Stomach (tissue), 19 donors: ENCODE measurements at regions of chr2 and their contacts with region 1.

Region 1: GRCh38 chr2:121529439-121530211 is 1.1 kb upstream of the RNU4ATAC start:
- DNase-seq: peak; percentile 44 to 92
- H3K4me3 ChIP-seq: peak overlapping the region; percentile 66 to 85 (median 74)
- H3K27ac ChIP-seq: peak overlapping the region; percentile 91 to 98 (median 95)
- H3K4me1 ChIP-seq: peaks cover 12 to 70% (median 45%) of the 10 kb centered on the region in 4 donors
- H3K27me3 ChIP-seq: no peaks in the 10 kb centered on the region
- CTCF ChIP-seq: no peak
- EP300 ChIP-seq: no peak
- POLR2A ChIP-seq: no peak

Region 2: GRCh38 chr2:121469356-121469755 is 60.3 kb before region 1 on chr2:
- intact Hi-C with region 1: loop called (anchors 10 kb)
- DNase-seq: peak in 1 of 2 donors; percentile 27
- H3K4me3 ChIP-seq: no peak overlapping the region
- H3K27ac ChIP-seq: no peak overlapping the region
- H3K4me1 ChIP-seq: peaks cover 0 to 8% (median 5%) of the 10 kb centered on the region in 4 donors
- H3K27me3 ChIP-seq: no peaks in the 10 kb centered on the region
- CTCF ChIP-seq: no peak
- EP300 ChIP-seq: no peak
- POLR2A ChIP-seq: no peak

Region 3: GRCh38 chr2:121479882-121480522 is 49.6 kb before region 1 on chr2:
- intact Hi-C with region 1: no loop called
- DNase-seq: peak; percentile 67 to 79
- H3K4me3 ChIP-seq: no peak overlapping the region
- H3K27ac ChIP-seq: peak overlapping the region in 2 of 5 donors; percentile 8 to 36
- H3K4me1 ChIP-seq: peaks cover 17 to 54% (median 40%) of the 10 kb centered on the region in 4 donors
- H3K27me3 ChIP-seq: no peaks in the 10 kb centered on the region
- CTCF ChIP-seq: peak in 2 of 7 experiments; percentile 20 to 42
- EP300 ChIP-seq: no peak
- POLR2A ChIP-seq: no peak

Region 4: DNA sequence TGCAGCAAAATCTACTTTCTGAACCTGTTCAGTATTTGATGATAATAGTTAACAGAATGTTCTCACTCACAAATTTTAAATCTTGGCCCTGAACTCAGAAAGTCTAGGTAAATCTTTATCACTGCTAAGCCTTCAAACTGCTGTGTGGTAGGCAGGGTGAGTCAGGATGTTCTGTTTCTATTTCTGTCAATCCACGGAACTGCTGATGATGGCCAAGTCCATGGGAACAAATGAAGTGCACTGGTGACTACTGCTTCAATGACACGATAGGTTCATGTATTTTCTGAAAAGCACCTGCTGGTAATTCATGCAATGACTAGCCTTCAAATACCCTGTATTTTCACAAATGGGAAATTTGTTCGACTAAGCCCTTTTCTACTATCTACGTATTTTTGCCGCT is 192.9 kb after region 1 on chr2:
- intact Hi-C with region 1: no loop called
- DNase-seq: no peak
- H3K4me3 ChIP-seq: no peak overlapping the region
- H3K27ac ChIP-seq: no peak overlapping the region
- H3K4me1 ChIP-seq: peaks cover 0 to 10% (median 7%) of the 10 kb centered on the region in 4 donors
- H3K27me3 ChIP-seq: no peaks in the 10 kb centered on the region
- CTCF ChIP-seq: no peak
- EP300 ChIP-seq: no peak
- POLR2A ChIP-seq: no peak